Activated naive CD4-positive, alpha-beta T cell treated with anti-CD3 and anti-CD28 coated beads, Interleukin-2, amount 10 ng/mL, durations not matched to agents 7 days and 5 days (primary cell): ENCODE measurements at regions of chr6 and their contacts with region 1.

Region 1: GRCh38 chr6:112180095-112180820 is 74.1 kb downstream of the LAMA4 start:
- DNase-seq: peak; percentile 59
- H3K4me3 Mint-ChIP-seq: no peak overlapping the region
- H3K27ac Mint-ChIP-seq: no peak overlapping the region
- H3K4me1 Mint-ChIP-seq: no peaks in the 10 kb centered on the region
- H3K27me3 Mint-ChIP-seq: peaks cover 16% of the 10 kb centered on the region

Region 2: DNA sequence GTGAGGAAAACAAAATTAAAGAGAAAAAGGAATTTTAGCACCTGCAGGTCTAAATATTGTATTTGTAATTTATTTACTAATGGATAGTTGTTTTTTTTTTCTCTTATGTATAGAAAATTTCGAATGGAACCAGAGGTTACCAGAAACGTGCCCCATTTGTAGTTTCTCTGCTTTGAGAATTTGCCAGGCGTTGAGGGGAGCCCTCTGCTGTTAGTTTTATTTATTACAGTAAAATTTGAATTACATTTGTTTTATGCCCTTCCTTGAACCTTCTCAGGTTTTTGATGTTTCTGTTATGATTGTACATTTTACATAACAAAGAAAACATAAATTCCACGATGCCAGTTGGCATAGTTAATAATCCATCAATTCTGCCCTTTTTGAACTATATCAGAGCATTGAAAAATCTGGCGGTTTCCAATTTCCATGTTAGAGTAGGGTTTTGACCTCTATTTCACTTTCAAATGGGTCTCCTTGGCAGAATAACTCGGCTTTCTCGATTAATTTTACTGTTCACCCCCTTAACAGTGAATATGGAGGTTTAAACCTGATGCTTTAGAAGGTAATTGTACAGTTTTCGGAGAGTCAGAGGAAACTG is 131.8 kb after region 1 on chr6:
- CTCF ChIA-PET with region 1: interaction called, 86 read pairs
- DNase-seq: no peak
- H3K4me3 Mint-ChIP-seq: no peak overlapping the region
- H3K27ac Mint-ChIP-seq: no peak overlapping the region
- H3K4me1 Mint-ChIP-seq: no peaks in the 10 kb centered on the region
- H3K27me3 Mint-ChIP-seq: peaks cover 20% of the 10 kb centered on the region

Region 3: GRCh38 chr6:112372226-112372806 is 192.1 kb after region 1 on chr6:
- CTCF ChIA-PET with region 1: interaction called, 21 read pairs
- DNase-seq: no peak
- H3K4me3 Mint-ChIP-seq: no peak overlapping the region
- H3K27ac Mint-ChIP-seq: no peak overlapping the region
- H3K4me1 Mint-ChIP-seq: no peaks in the 10 kb centered on the region
- H3K27me3 Mint-ChIP-seq: peaks cover 9% of the 10 kb centered on the region